ENCODE measurements at regions of chrX and their contacts with region 1.

Region 1: DNA sequence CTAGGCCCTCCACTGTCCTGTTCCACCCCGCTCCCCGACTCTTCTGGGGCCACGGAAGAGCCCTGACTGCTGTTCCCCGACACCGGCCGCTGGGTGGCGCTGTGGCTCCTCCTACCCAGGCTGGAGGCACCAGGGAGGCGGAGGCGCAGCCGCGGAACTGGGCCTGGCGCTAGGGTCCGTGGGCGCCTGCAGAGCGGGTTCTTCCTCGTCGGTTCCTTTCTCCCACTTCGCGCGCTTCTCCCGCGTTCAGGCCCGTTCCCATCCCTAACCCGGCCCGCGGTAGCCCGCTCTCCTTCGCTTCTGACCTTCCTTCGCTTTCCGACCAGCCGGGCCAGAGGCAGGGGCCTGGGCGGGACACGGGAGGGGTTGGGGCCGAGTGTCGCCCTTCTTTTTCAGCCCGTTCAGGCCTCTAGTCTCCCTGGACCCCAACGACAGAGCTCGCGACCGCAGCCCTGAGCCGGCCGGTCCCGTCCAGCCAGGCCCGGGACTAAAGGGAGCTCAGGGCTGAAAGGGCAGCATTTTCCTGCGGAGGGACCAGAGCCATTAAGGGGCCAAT is 34.3 kb downstream of the NALF2 start:
- DNase-seq: peak; percentile 51
- ATAC-seq: peak; percentile 78
- H3K4me3 Mint-ChIP-seq: peak overlapping the region; percentile 58
- H3K27ac Mint-ChIP-seq: no peak overlapping the region
- H3K4me1 Mint-ChIP-seq: peaks cover 21% of the 10 kb centered on the region
- H3K27me3 Mint-ChIP-seq: no peaks in the 10 kb centered on the region
- CTCF ChIP-seq: no peak

Region 2: DNA sequence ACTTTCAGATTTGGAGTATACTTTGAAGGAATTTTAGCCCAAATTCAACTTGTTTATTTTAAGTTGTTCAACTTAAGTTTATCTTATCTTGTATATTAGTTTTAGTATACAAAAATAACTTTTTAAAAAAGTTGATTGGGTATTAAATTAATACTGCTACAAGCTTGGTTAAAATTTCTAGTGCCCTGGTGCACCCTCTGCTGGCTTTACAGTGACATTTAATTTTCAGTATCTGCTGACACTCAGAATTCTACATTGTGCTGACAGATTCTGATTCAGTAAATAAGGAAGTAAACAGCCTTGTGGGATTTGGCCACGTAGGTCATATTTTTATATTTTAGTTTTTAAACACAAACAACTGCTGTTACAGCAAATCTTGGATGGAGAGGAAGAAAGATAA is 80.4 kb after region 1 on chrX:
- CTCF ChIA-PET with region 1: no interaction called
- POLR2A ChIA-PET with region 1: no interaction called
- intact Hi-C with region 1: loop called (anchors 1 kb)
- DNase-seq: no peak
- ATAC-seq: no peak
- H3K4me3 Mint-ChIP-seq: no peak overlapping the region
- H3K27ac Mint-ChIP-seq: no peak overlapping the region
- H3K4me1 Mint-ChIP-seq: peaks cover 9% of the 10 kb centered on the region
- H3K27me3 Mint-ChIP-seq: peaks cover 9% of the 10 kb centered on the region
- CTCF ChIP-seq: no peak

Region 3: DNA sequence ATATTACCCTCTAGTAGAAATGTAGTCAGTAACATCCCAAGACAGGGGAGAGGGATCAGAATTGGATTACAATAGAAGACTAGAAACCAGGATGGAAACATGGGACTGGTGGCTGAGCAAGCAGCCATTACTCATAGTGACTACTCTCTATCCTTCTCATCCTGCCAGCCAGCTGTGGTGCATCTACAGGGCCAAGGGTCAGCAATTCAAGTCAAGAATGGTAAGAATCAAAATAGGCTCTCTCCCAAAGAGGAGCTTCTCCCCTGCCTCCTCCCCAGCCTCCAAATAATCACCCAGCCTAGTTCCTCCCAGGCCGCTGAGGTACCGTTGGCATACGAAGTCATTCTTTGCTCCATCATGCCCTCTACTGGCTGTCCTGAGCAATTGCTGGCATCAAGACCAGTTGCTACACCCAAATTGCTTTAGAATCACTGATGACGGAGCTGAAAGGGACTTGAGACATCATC is 491.9 kb after region 1 on chrX:
- CTCF ChIA-PET with region 1: no interaction called
- POLR2A ChIA-PET with region 1: no interaction called
- intact Hi-C with region 1: loop called (anchors 2 kb)
- DNase-seq: no peak
- ATAC-seq: no peak
- H3K4me3 Mint-ChIP-seq: no peak overlapping the region
- H3K27ac Mint-ChIP-seq: no peak overlapping the region
- H3K4me1 Mint-ChIP-seq: no peaks in the 10 kb centered on the region
- H3K27me3 Mint-ChIP-seq: no peaks in the 10 kb centered on the region
- CTCF ChIP-seq: no peak

Region 4: DNA sequence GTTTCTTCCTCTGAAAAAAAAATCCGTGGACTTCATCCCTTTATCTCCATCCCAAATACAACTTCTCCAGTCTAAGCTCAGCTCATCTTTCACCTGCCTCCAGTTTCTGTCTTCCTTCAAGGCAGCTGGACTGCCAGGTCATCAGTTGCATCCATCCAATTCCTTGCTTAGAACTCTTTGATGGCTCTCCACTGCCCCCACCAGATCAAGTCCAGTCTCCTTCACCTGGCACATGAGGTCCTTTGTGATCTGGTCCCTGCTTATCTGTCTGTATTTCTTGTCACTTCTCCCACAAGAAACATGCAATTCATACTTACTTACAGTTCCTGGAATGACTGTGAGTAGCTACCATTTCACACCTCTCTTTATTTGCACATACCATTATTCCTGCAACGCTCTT is 557.7 kb after region 1 on chrX:
- CTCF ChIA-PET with region 1: interaction called, 10 read pairs
- POLR2A ChIA-PET with region 1: no interaction called
- intact Hi-C with region 1: no loop called
- DNase-seq: no peak
- ATAC-seq: no peak
- H3K4me3 Mint-ChIP-seq: no peak overlapping the region
- H3K27ac Mint-ChIP-seq: no peak overlapping the region
- H3K4me1 Mint-ChIP-seq: no peaks in the 10 kb centered on the region
- H3K27me3 Mint-ChIP-seq: peaks cover 10% of the 10 kb centered on the region
- CTCF ChIP-seq: no peak

Region 5: DNA sequence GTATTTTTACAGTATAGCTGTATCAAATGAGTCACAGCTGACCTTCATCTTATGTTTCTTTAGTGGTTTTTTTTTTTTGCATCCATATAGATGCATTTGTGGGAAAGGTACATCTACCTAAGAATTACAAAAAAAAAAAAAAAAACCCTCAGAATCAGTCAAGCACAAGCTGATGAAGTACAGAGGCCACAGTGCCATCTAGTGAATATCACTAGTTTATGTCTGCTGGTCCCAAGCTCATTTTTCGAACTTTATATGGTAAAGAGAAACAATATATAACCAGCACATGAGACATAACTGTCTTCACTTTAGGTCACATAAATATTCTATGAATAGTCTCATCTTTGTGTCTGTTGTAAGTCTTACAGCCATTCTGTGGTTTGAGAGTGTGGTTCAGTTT is 1126.3 kb after region 1 on chrX:
- CTCF ChIA-PET with region 1: no interaction called
- POLR2A ChIA-PET with region 1: no interaction called
- intact Hi-C with region 1: loop called (anchors 5 kb)
- DNase-seq: no peak
- ATAC-seq: no peak
- H3K4me3 Mint-ChIP-seq: no peak overlapping the region
- H3K27ac Mint-ChIP-seq: no peak overlapping the region
- H3K4me1 Mint-ChIP-seq: no peaks in the 10 kb centered on the region
- H3K27me3 Mint-ChIP-seq: no peaks in the 10 kb centered on the region
- CTCF ChIP-seq: no peak